ENCODE measurements at regions of chr13 and their contacts with region 1.

Region 1: GRCh38 chr13:51286135-51287002 is 53.1 kb upstream of the SERPINE3 start:
- DNase-seq: peak; percentile 77 to 93 (median 85)
- H3K4me3 ChIP-seq: no peak overlapping the region
- H3K27ac ChIP-seq: no peak overlapping the region
- H3K4me1 ChIP-seq: peaks cover 0 to 4% of the 10 kb centered on the region in 2 donors
- H3K27me3 ChIP-seq: no peaks in the 10 kb centered on the region
- CTCF ChIP-seq: peak; percentile 85 to 97 (median 89)
- POLR2A ChIP-seq: no peak

Region 2: GRCh38 chr13:51125498-51126226 is 160.7 kb before region 1 on chr13:
- intact Hi-C with region 1: loop called in 1 of 2 experiments (anchors 5 kb)
- DNase-seq: peak; percentile 35 to 80 (median 70)
- H3K4me3 ChIP-seq: no peak overlapping the region
- H3K27ac ChIP-seq: no peak overlapping the region
- H3K4me1 ChIP-seq: no peaks in the 10 kb centered on the region
- H3K27me3 ChIP-seq: peaks cover 4% of the 10 kb centered on the region
- CTCF ChIP-seq: peak; percentile 61 to 81 (median 72)
- POLR2A ChIP-seq: no peak

Region 3: GRCh38 chr13:51148952-51149573 is 137.3 kb before region 1 on chr13:
- intact Hi-C with region 1: loop called (anchors 5 kb)
- DNase-seq: peak; percentile 40 to 79 (median 59)
- H3K4me3 ChIP-seq: no peak overlapping the region
- H3K27ac ChIP-seq: no peak overlapping the region
- H3K4me1 ChIP-seq: no peaks in the 10 kb centered on the region
- H3K27me3 ChIP-seq: no peaks in the 10 kb centered on the region
- CTCF ChIP-seq: peak; percentile 36 to 71 (median 65)
- POLR2A ChIP-seq: no peak

Region 4: GRCh38 chr13:51222037-51222685 is 64.2 kb before region 1 on chr13 and contains the start of gene FAM124A:
- intact Hi-C with region 1: loop called in 1 of 2 experiments (anchors 5 kb)
- DNase-seq: peak in 6 of 7 donors; percentile 27 to 62 (median 46)
- H3K4me3 ChIP-seq: peak within 1 kb of the TSS in 3 of 4 donors; percentile 40 to 98 (median 64)
- H3K27ac ChIP-seq: peak within 1 kb of the TSS in 2 of 5 donors; percentile 36 to 77
- H3K4me1 ChIP-seq: peaks cover 3 to 5% of the 10 kb centered on the region in 2 donors
- H3K27me3 ChIP-seq: no peaks in the 10 kb centered on the region
- CTCF ChIP-seq: peak in 3 of 6 experiments; percentile 37 to 67 (median 42)
- POLR2A ChIP-seq: peak; percentile 10 to 41
- total RNA-seq, gene FAM124A: 0.78 to 11.7 (median 3.6) TPM